Mammary epithelial cell (primary cell): ENCODE measurements at regions of chr17 and their contacts with region 1.

Region 1: GRCh38 chr17:44689477-44690217 is at the start of gene CCDC43:
- DNase-seq: peak; percentile 90
- H3K4me3 ChIP-seq: peak within 1 kb of the TSS; percentile 63 to 84 (median 84)
- H3K27ac ChIP-seq: peak within 1 kb of the TSS; percentile 69
- H3K4me1 ChIP-seq: peaks cover 4% of the 10 kb centered on the region
- H3K27me3 ChIP-seq: no peaks in the 10 kb centered on the region
- CTCF ChIP-seq: no peak
- total RNA-seq, gene CCDC43: 34.8 to 36.4 TPM

Region 2: GRCh38 chr17:44607836-44608690 is 81.6 kb before region 1 on chr17:
- CTCF ChIA-PET with region 1: no interaction called
- dilution Hi-C with region 1: no loop called
- in situ Hi-C with region 1: no loop called
- intact Hi-C with region 1: no loop called
- DNase-seq: no peak
- H3K4me3 ChIP-seq: no peak overlapping the region
- H3K27ac ChIP-seq: no peak overlapping the region
- H3K4me1 ChIP-seq: no peaks in the 10 kb centered on the region
- H3K27me3 ChIP-seq: no peaks in the 10 kb centered on the region
- CTCF ChIP-seq: no peak

Region 3: DNA sequence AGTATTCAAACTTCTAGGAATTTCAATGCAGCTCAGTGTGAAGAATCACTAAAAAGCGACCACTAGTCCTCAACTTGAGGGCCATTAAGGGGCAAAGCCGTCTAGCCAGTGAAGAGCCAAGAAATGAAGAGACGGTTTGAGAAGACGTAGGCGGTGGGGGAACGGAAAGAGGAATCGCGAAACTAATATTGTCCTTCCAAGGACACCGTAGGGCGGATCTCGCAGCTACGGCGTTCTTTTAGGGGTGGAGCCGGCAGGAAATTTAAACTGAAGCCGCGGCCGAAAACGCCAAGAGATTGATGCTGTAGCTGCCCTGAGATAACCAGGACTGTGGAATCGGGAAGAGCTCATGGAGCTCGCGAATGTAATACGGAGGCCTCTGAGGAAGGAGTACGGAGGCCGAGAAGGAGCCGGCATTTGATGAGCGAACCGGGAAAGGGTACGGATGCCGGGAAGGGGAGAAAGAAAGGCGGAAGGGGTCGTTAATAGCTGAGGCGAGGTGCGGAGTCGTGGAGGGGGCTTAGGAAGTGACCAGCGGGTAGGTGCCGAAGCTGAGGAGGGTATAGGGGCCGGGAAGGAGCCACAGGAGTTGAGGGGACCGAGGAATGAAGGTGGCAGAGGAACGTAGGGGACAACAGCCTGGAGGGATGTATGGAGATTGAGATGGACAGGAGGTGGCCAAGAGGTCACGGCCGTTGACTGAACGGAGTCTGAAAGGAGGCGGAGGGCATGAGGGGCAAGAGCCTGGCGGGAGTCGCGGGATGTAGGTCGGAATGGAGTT is 18.9 kb after region 1 on chr17 and contains the start of gene DBF4B:
- CTCF ChIA-PET with region 1: no interaction called
- dilution Hi-C with region 1: no loop called
- in situ Hi-C with region 1: no loop called
- intact Hi-C with region 1: loop called (anchors 2 kb)
- DNase-seq: peak; percentile 89
- H3K4me3 ChIP-seq: peak within 1 kb of the TSS; percentile 68 to 96 (median 95)
- H3K27ac ChIP-seq: peak within 1 kb of the TSS; percentile 58
- H3K4me1 ChIP-seq: peaks cover 10% of the 10 kb centered on the region
- H3K27me3 ChIP-seq: no peaks in the 10 kb centered on the region
- CTCF ChIP-seq: no peak
- total RNA-seq, gene DBF4B: 1.3 to 13.8 TPM

Region 4: GRCh38 chr17:44749980-44750318 is 60.3 kb after region 1 on chr17:
- CTCF ChIA-PET with region 1: no interaction called
- dilution Hi-C with region 1: loop called (anchors 5 kb)
- in situ Hi-C with region 1: no loop called
- intact Hi-C with region 1: no loop called
- DNase-seq: no peak
- H3K4me3 ChIP-seq: no peak overlapping the region
- H3K27ac ChIP-seq: no peak overlapping the region
- H3K4me1 ChIP-seq: no peaks in the 10 kb centered on the region
- H3K27me3 ChIP-seq: no peaks in the 10 kb centered on the region
- CTCF ChIP-seq: no peak

Region 5: DNA sequence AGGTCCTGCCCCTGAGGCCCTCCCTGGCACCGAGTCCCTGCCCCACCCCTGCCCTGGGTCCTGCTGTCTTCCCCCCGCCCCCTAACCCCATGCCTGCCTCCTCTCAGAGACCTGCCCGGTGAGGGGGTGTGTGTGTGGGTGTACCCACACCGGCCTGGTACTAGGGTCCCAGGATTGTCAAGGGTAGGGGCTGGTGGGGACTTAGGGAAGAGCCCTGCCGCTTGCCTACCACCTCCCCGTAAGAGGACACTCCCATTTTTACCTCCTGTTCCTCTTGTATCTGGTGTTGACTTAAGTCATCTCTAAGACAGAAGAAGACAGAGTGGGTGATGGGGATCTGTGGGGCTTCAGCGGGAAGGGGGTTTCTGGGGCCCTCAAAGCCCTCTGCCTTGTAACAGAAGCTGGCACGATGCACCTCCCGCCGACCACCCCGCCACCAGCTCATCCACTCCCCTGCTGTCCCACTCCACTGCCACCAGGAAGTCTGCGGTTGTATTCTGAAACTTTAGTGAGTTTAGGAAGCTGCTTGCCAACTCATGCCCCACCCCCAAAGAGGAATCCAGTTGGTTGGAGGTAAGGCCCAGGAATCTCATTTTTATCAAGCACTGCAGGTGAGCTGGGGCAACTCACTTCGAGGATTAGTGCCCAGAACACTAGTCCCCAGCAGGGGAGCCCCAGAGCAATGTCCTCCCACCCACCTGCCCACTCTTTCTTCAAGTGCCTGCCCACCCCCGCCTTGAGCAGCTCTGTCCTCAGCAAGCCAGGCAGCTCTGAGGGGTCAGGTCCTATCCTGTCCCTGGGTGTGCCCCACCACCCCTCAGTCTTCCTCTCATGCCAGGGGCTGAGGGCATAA is 566.7 kb after region 1 on chr17:
- CTCF ChIA-PET with region 1: no interaction called
- dilution Hi-C with region 1: no loop called
- in situ Hi-C with region 1: no loop called
- intact Hi-C with region 1: no loop called
- DNase-seq: no peak
- H3K4me3 ChIP-seq: no peak overlapping the region
- H3K27ac ChIP-seq: no peak overlapping the region
- H3K4me1 ChIP-seq: no peaks in the 10 kb centered on the region
- H3K27me3 ChIP-seq: no peaks in the 10 kb centered on the region
- CTCF ChIP-seq: peak in 1 of 2 donors; percentile 6

Region 6: GRCh38 chr17:45440155-45440778 is 750.6 kb after region 1 on chr17:
- CTCF ChIA-PET with region 1: no interaction called
- dilution Hi-C with region 1: no loop called
- in situ Hi-C with region 1: no loop called
- intact Hi-C with region 1: no loop called
- DNase-seq: no peak
- H3K4me3 ChIP-seq: no peak overlapping the region
- H3K27ac ChIP-seq: no peak overlapping the region
- H3K4me1 ChIP-seq: peaks cover 10% of the 10 kb centered on the region
- H3K27me3 ChIP-seq: no peaks in the 10 kb centered on the region
- CTCF ChIP-seq: no peak